Activated CD4-positive, alpha-beta T cell treated with anti-CD3 and anti-CD28 coated beads, Interleukin-2, amount 10 ng/mL, durations not matched to agents 24 days and 14 days (primary cell): ENCODE measurements at regions of chr1 and their contacts with region 1.

Region 1: GRCh38 chr1:244652699-244653466 is at the start of gene DESI2:
- DNase-seq: peak; percentile 99
- H3K4me3 Mint-ChIP-seq: peak within 1 kb of the TSS; percentile 82
- H3K27ac Mint-ChIP-seq: peak within 1 kb of the TSS; percentile 84
- H3K4me1 Mint-ChIP-seq: peaks cover 23% of the 10 kb centered on the region
- H3K27me3 Mint-ChIP-seq: no peaks in the 10 kb centered on the region
- total RNA-seq, gene DESI2: 32.3 and 33.1 TPM in 2 replicates

Region 2: DNA sequence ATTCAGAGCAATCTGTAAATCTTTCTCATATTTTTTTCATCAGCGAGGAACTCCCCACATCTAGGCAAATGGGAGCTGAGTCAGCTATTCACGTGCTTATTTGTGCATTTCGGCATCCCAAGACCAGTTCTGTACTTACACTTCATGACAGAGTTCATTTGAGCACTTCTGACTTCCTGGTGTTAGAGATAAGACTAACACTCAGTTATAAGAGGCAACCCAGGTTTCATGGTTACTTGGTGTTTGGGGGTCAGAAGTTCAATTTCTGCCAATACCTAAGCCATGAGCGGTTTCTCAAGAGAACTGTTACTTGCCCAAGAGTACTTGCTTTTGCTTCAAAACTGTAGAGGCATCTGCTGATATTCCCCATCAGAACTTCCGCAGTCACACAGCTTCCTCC is 24.1 kb before region 1 on chr1:
- intact Hi-C with region 1: no loop called
- DNase-seq: no peak
- H3K4me3 Mint-ChIP-seq: no peak overlapping the region
- H3K27ac Mint-ChIP-seq: no peak overlapping the region
- H3K4me1 Mint-ChIP-seq: no peaks in the 10 kb centered on the region
- H3K27me3 Mint-ChIP-seq: peaks cover 10% of the 10 kb centered on the region

Region 3: DNA sequence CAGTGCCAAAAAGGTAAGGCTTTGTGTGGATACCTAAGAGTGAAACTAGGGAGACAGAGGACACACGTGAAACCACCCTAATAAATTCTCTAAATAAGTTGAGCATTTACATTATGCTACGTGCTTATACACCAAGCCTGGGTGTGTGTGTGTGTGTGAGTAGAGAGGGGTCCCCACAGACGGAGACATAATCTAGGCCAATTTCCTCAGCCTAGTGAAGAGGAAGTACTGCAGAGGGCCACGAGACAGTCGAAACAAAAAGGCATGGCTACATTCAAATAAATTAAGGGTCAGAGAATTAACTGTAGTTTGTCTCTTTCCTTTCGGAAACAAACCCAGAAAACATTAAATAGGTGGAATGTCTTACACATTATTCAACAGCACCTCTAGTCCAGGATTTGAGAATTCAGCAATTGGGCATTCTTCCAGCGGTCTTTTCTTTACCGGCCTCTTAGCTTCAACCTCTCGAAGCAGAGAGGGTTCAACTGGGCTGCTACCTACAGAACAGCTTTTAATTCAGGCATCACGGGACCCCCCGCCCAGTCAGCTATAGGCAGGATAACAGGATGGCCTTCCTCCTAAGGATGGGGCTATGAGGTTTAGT is 75.1 kb after region 1 on chr1:
- intact Hi-C with region 1: loop called (anchors 2 kb)
- DNase-seq: no peak
- H3K4me3 Mint-ChIP-seq: no peak overlapping the region
- H3K27ac Mint-ChIP-seq: no peak overlapping the region
- H3K4me1 Mint-ChIP-seq: peaks cover 12% of the 10 kb centered on the region
- H3K27me3 Mint-ChIP-seq: peaks cover 28% of the 10 kb centered on the region

Region 4: GRCh38 chr1:244835276-244836134 is 182.6 kb after region 1 on chr1 and contains the start of gene COX20:
- intact Hi-C with region 1: loop called (anchors 1 kb)
- DNase-seq: peak; percentile 97
- H3K4me3 Mint-ChIP-seq: peak within 1 kb of the TSS; percentile 91
- H3K27ac Mint-ChIP-seq: peak within 1 kb of the TSS; percentile 99
- H3K4me1 Mint-ChIP-seq: peaks cover 43% of the 10 kb centered on the region
- H3K27me3 Mint-ChIP-seq: no peaks in the 10 kb centered on the region
- total RNA-seq, gene COX20: 28.6 and 30.0 TPM in 2 replicates